IMR-90 (cell line): ENCODE measurements at regions of chr22 and their contacts with region 1.

Region 1: DNA sequence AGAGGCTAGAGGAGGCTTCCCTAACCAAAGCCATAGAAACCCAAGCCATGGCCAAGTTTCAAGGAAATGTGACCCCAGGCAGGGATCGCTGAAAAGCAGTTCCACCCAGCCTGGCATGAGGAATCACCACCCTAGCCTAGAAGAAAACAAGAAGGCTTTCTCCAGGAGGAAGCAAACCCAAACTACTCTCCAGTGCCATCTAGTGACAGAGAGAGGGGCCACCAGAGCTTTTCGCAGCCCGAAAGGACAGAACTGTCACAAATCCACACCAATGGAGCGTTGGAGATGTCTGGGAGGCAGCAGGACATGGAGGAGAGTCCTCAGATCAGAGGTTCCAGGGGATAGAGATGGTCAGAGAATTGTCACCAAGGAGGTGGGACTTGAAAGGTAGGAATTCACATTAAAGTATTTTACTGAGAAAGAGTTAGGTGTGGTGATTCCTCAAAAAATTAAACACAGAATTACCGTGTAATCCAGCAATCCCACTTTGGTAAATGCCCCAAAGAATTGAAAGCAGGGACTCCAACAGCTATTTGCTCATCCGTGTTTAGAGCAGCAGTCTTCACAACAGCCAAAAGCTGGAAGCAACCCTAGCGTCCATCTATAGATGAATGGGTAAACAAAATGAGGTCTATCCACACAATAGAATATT is 67.3 kb upstream of the NUP50 start:
- DNase-seq: peak; percentile 58
- ATAC-seq: peak; percentile 97
- H3K4me3 ChIP-seq: no peak overlapping the region
- H3K27ac ChIP-seq: no peak overlapping the region
- H3K4me1 ChIP-seq: no peaks in the 10 kb centered on the region
- H3K27me3 ChIP-seq: peaks cover 32% of the 10 kb centered on the region
- CTCF ChIP-seq: peak; percentile 91
- POLR2A ChIP-seq: no peak
- RAD21 ChIP-seq: peak; percentile 85

Region 2: GRCh38 chr22:44819971-44820631 is 276.3 kb before region 1 on chr22:
- CTCF ChIA-PET with region 1: no interaction called
- POLR2A ChIA-PET with region 1: no interaction called
- dilution Hi-C with region 1: no loop called
- in situ Hi-C with region 1: loop called (anchors 10 kb)
- intact Hi-C with region 1: loop called (anchors 1 kb)
- DNase-seq: no peak
- ATAC-seq: no peak
- H3K4me3 ChIP-seq: no peak overlapping the region
- H3K27ac ChIP-seq: no peak overlapping the region
- H3K4me1 ChIP-seq: no peaks in the 10 kb centered on the region
- H3K27me3 ChIP-seq: peaks cover 24% of the 10 kb centered on the region
- CTCF ChIP-seq: no peak
- POLR2A ChIP-seq: no peak
- RAD21 ChIP-seq: no peak

Region 3: GRCh38 chr22:44828193-44828592 is 268.2 kb before region 1 on chr22:
- CTCF ChIA-PET with region 1: no interaction called
- POLR2A ChIA-PET with region 1: no interaction called
- dilution Hi-C with region 1: no loop called
- in situ Hi-C with region 1: loop called (anchors 10 kb)
- intact Hi-C with region 1: no loop called
- DNase-seq: no peak
- ATAC-seq: peak; percentile 64; the same call in 1 of the 2 replicates
- H3K4me3 ChIP-seq: no peak overlapping the region
- H3K27ac ChIP-seq: no peak overlapping the region
- H3K4me1 ChIP-seq: no peaks in the 10 kb centered on the region
- H3K27me3 ChIP-seq: peaks cover 4% of the 10 kb centered on the region; the same call in 1 of the 2 replicates
- CTCF ChIP-seq: peak; percentile 38
- POLR2A ChIP-seq: no peak
- RAD21 ChIP-seq: peak; percentile 25; the same call in 1 of the 2 replicates

Region 4: GRCh38 chr22:44956840-44957767 is 139.3 kb before region 1 on chr22:
- CTCF ChIA-PET with region 1: no interaction called
- POLR2A ChIA-PET with region 1: no interaction called
- dilution Hi-C with region 1: no loop called
- in situ Hi-C with region 1: no loop called
- intact Hi-C with region 1: loop called (anchors 5 kb)
- DNase-seq: peak; percentile 6
- ATAC-seq: peak; percentile 73
- H3K4me3 ChIP-seq: no peak overlapping the region
- H3K27ac ChIP-seq: no peak overlapping the region
- H3K4me1 ChIP-seq: no peaks in the 10 kb centered on the region
- H3K27me3 ChIP-seq: peaks cover 54% of the 10 kb centered on the region
- CTCF ChIP-seq: peak; percentile 32
- POLR2A ChIP-seq: no peak
- RAD21 ChIP-seq: 0 out of 2 replicates have a peak, but pooled peaks have one; percentile 19

Region 5: DNA sequence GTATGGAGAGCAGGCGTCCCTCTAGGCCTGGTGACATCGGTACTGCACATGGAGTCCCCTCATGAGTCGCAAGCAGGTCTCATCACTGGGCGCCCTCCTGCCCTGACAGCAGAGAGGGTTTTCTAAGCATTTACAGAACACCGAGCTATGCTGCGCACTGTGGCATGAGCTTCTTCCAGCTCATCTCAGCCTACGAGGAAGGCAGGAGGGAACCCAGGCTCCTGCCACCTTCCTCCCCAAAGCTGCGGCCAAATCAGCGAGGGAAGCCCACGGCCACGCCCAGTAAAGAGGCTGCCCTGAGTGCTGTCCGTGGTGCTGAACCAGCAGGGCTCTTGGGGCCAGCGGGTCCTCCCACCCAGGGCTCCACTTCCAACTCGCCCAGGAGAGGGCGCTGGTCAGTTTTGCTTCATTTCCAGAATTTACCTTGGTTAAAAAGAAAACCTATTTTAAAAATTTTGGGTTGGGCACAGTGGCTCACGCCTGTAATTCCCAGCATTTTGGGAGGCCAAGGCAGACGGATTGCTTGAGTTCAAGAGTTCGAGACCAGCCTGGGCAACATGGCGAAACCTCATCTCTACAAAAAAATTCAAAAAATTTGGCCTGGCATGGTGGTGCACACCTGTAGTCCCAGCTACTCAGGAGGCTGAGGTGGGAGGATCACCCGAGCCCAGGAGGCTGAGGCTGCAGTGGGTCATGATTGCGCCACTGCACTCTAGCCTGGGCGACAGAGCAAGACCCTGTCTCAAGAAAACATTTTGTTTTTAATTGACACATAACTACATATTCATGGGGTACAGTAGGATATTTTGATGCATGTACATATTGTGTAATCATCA is 120.7 kb before region 1 on chr22:
- CTCF ChIA-PET with region 1: no interaction called
- POLR2A ChIA-PET with region 1: no interaction called
- dilution Hi-C with region 1: no loop called
- in situ Hi-C with region 1: loop called (anchors 10 kb)
- intact Hi-C with region 1: loop called (anchors 1 kb)
- DNase-seq: peak; percentile 76
- ATAC-seq: peak; percentile 99
- H3K4me3 ChIP-seq: no peak overlapping the region
- H3K27ac ChIP-seq: no peak overlapping the region
- H3K4me1 ChIP-seq: no peaks in the 10 kb centered on the region
- H3K27me3 ChIP-seq: peaks cover 30% of the 10 kb centered on the region
- CTCF ChIP-seq: peak; percentile 92
- POLR2A ChIP-seq: no peak
- RAD21 ChIP-seq: peak; percentile 78

Region 6: GRCh38 chr22:44988671-44989070 is 107.7 kb before region 1 on chr22:
- CTCF ChIA-PET with region 1: no interaction called
- POLR2A ChIA-PET with region 1: no interaction called
- dilution Hi-C with region 1: no loop called
- in situ Hi-C with region 1: loop called (anchors 10 kb)
- intact Hi-C with region 1: no loop called
- DNase-seq: no peak
- ATAC-seq: no peak
- H3K4me3 ChIP-seq: no peak overlapping the region
- H3K27ac ChIP-seq: no peak overlapping the region
- H3K4me1 ChIP-seq: no peaks in the 10 kb centered on the region
- H3K27me3 ChIP-seq: peaks cover 20% of the 10 kb centered on the region
- CTCF ChIP-seq: no peak
- POLR2A ChIP-seq: no peak
- RAD21 ChIP-seq: no peak

Region 7: DNA sequence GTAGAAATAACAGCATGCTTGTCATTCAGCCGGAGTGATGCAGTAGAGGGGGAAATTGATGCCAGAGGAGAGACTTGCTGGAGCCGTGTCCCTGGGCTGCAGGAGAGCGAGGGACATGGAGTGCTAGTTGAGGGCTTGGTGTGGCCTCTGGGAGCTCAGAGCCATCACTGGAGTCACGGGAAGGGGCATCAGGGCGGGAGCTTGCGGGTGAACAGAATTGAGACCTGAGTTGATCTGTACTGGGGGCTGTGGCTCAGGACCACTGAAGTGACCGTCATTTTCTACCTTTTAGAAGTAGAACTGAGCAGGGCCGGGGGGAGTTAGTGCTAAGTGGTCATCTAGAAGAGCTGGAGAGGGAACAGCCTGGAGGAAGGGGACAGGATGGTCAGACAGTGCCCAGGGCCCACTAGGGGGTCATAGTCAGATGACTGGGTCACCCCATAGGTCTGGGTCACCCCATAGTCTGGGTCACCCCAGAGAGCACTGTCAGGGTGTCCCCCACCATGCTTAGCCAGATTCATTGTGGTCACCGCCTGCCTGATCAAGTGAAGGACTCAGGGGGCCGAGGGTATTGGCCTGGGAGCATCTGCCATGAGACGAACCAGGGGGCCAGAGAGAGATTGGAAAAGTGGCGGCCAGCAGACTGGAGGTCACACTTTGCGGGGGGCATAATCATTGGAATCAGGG is 332.2 kb after region 1 on chr22:
- CTCF ChIA-PET with region 1: no interaction called
- POLR2A ChIA-PET with region 1: no interaction called
- dilution Hi-C with region 1: no loop called
- in situ Hi-C with region 1: no loop called
- intact Hi-C with region 1: no loop called
- DNase-seq: no peak
- ATAC-seq: no peak
- H3K4me3 ChIP-seq: no peak overlapping the region
- H3K27ac ChIP-seq: no peak overlapping the region
- H3K4me1 ChIP-seq: no peaks in the 10 kb centered on the region
- H3K27me3 ChIP-seq: peaks cover 19% of the 10 kb centered on the region; the same call in 1 of the 2 replicates
- CTCF ChIP-seq: no peak
- POLR2A ChIP-seq: no peak
- RAD21 ChIP-seq: no peak